GM12878 (cell line): ENCODE measurements at regions of chr13 and their contacts with region 1.

Region 1: GRCh38 chr13:36420437-36420891 is 11.8 kb upstream of the CCNA1 start:
- DNase-seq: peak; percentile 25
- ATAC-seq: peak; percentile 86
- H3K4me3 ChIP-seq: no peak overlapping the region
- H3K27ac ChIP-seq: no peak overlapping the region
- H3K4me1 ChIP-seq: no peaks in the 10 kb centered on the region; the same call in 1 of the 2 replicates
- H3K27me3 ChIP-seq: no peaks in the 10 kb centered on the region
- CTCF ChIP-seq: peak; percentile 79 to 86 (median 84)
- EP300 ChIP-seq: no peak; a peak in 1 of 4 replicates
- POLR2A ChIP-seq: no peak
- RAD21 ChIP-seq: peak; percentile 83

Region 2: DNA sequence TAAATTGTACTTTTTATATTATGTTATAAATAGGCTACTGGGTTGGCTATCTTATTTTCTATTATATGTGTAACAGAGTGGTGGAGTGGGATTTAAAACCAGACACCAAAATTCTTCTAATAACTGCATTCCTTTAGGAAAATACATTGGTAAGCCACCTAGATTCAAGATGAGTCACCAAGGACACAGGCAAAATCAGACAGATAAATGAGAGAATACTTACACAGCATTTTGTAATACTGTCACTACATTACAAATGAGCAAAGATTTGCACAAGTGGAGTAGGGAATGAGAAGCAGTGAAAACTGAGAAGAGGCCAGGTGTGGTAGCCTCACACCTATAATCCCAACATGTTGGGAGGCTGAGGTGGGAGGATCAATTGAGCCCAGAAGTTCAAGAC is 68.1 kb before region 1 on chr13:
- CTCF ChIA-PET with region 1: interaction called, 15 read pairs
- POLR2A ChIA-PET with region 1: interaction called, 7 read pairs
- RAD21 ChIA-PET with region 1: interaction called, 9 read pairs
- SMC1A ChIA-PET with region 1: interaction called, 16 read pairs
- in situ Hi-C with region 1: loop called (anchors 5 kb)
- intact Hi-C with region 1: loop called (anchors 2 kb)
- DNase-seq: no peak
- ATAC-seq: no peak
- H3K4me3 ChIP-seq: no peak overlapping the region
- H3K27ac ChIP-seq: no peak overlapping the region
- H3K4me1 ChIP-seq: no peaks in the 10 kb centered on the region
- H3K27me3 ChIP-seq: no peaks in the 10 kb centered on the region
- CTCF ChIP-seq: no peak
- EP300 ChIP-seq: no peak
- POLR2A ChIP-seq: no peak
- RAD21 ChIP-seq: no peak

Region 3: GRCh38 chr13:36436811-36437210 is 16.3 kb after region 1 on chr13:
- CTCF ChIA-PET with region 1: interaction called, 22 read pairs
- POLR2A ChIA-PET with region 1: no interaction called
- RAD21 ChIA-PET with region 1: interaction called, 6 read pairs
- SMC1A ChIA-PET with region 1: interaction called, 33 read pairs
- in situ Hi-C with region 1: no loop called
- intact Hi-C with region 1: no loop called
- DNase-seq: no peak
- ATAC-seq: peak; percentile 64
- H3K4me3 ChIP-seq: no peak overlapping the region
- H3K27ac ChIP-seq: no peak overlapping the region
- H3K4me1 ChIP-seq: no peaks in the 10 kb centered on the region
- H3K27me3 ChIP-seq: peaks cover 0 to 5% of the 10 kb centered on the region in 2 experiments; a peak in 2 of 4 replicates
- CTCF ChIP-seq: no peak
- EP300 ChIP-seq: peak in 1 of 2 experiments; percentile 57; a peak in 1 of 4 replicates
- POLR2A ChIP-seq: no peak
- RAD21 ChIP-seq: no peak

Region 4: DNA sequence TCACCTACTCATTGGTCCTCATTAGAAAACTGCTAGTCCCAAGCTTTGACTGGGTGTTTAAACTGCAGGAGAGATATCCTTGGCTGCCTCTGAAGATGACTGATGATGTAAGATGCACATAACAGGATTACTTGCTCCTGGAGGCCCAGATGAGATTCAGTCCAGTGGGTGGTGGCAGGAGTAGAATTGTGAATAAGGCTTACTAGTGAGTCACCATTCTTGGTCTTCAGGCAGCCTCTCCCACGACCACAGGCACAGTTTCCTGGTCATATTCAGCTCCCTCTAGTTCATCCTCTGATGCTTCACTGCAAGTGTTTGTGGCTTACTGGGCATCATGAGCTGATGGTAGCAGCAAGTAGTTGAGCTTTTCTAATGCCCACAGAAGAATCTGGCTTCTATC is 265.5 kb after region 1 on chr13:
- CTCF ChIA-PET with region 1: no interaction called
- POLR2A ChIA-PET with region 1: no interaction called
- RAD21 ChIA-PET with region 1: no interaction called
- SMC1A ChIA-PET with region 1: no interaction called
- in situ Hi-C with region 1: no loop called
- intact Hi-C with region 1: no loop called
- DNase-seq: no peak
- ATAC-seq: no peak
- H3K4me3 ChIP-seq: no peak overlapping the region
- H3K27ac ChIP-seq: no peak overlapping the region
- H3K4me1 ChIP-seq: no peaks in the 10 kb centered on the region
- H3K27me3 ChIP-seq: no peaks in the 10 kb centered on the region
- CTCF ChIP-seq: no peak
- EP300 ChIP-seq: no peak
- POLR2A ChIP-seq: no peak
- RAD21 ChIP-seq: no peak

Region 5: GRCh38 chr13:36736119-36736726 is 315.8 kb after region 1 on chr13:
- CTCF ChIA-PET with region 1: interaction called, 69 read pairs
- POLR2A ChIA-PET with region 1: no interaction called
- RAD21 ChIA-PET with region 1: interaction called, 8 read pairs
- SMC1A ChIA-PET with region 1: interaction called, 46 read pairs
- in situ Hi-C with region 1: no loop called
- intact Hi-C with region 1: loop called (anchors 1 kb)
- DNase-seq: no peak
- ATAC-seq: no peak
- H3K4me3 ChIP-seq: no peak overlapping the region
- H3K27ac ChIP-seq: no peak overlapping the region
- H3K4me1 ChIP-seq: no peaks in the 10 kb centered on the region
- H3K27me3 ChIP-seq: no peaks in the 10 kb centered on the region
- CTCF ChIP-seq: peak; percentile 48 to 62 (median 56)
- EP300 ChIP-seq: no peak
- POLR2A ChIP-seq: no peak
- RAD21 ChIP-seq: peak; percentile 56

Region 6: DNA sequence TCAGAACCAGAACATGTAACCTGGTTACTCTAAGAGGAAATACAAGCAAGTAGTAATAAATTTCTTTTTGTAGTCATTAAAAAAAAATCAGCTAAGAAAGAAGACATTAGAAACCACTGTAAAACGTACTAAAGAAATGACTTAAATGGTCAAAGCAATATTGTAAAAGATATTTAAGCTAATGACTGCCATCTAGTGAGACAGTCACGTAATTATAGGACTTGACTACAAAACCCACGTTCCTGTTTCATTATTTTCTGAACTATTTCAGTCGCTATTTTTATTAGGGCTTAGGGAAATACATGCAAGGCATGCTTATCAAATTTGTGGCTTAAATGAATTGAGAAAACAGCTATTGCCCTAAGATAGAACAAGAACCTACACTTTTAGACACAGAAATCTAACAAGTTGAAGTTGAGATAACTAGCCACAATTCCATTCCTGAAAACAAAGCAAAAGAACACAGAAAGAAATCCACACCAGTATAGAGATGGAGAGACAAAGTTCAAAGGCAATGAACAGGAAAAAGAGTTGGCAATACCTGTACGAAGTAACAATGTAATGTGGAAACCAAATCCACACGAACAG is 560.8 kb after region 1 on chr13:
- CTCF ChIA-PET with region 1: interaction called, 30 read pairs
- POLR2A ChIA-PET with region 1: no interaction called
- RAD21 ChIA-PET with region 1: interaction called, 4 read pairs
- SMC1A ChIA-PET with region 1: interaction called, 5 read pairs
- in situ Hi-C with region 1: loop called (anchors 10 kb)
- intact Hi-C with region 1: loop called (anchors 5 kb)
- DNase-seq: no peak
- ATAC-seq: peak; percentile 74
- H3K4me3 ChIP-seq: no peak overlapping the region
- H3K27ac ChIP-seq: no peak overlapping the region
- H3K4me1 ChIP-seq: no peaks in the 10 kb centered on the region
- H3K27me3 ChIP-seq: no peaks in the 10 kb centered on the region
- CTCF ChIP-seq: peak; percentile 25 to 59 (median 47); a peak in 5 of 6 replicates
- EP300 ChIP-seq: no peak
- POLR2A ChIP-seq: no peak
- RAD21 ChIP-seq: peak; percentile 61